Right lobe of liver (tissue), 6 donors: ENCODE measurements at regions of chr3 and their contacts with region 1.

Region 1: DNA sequence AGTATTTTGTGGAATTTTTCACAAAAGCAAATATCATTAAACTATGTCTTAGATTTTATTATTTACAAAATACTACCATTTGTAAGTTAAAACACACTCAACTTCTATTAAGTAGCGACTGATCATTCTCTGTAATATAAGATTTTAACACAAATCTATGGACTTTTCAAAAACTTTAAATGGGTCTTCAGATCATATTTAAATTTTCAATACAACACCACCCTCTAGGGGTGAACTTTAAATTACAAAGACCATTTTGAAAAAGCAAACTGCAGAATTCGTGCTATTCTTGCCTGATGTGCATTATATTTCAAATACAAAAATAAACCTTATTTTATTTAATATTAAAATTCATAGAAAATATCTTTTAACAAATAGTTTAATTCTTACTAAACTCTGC is 8.2 kb upstream of the VGLL4 start:
- DNase-seq: no peak
- ATAC-seq: peak in 3 of 4 donors; percentile 40 to 58 (median 50)
- H3K4me3 ChIP-seq: no peak overlapping the region
- H3K27ac ChIP-seq: no peak overlapping the region
- H3K4me1 ChIP-seq: no peaks in the 10 kb centered on the region
- H3K27me3 ChIP-seq: no peaks in the 10 kb centered on the region
- CTCF ChIP-seq: peak; percentile 44 to 60 (median 53)
- POLR2A ChIP-seq: no peak

Region 2: GRCh38 chr3:11236595-11237461 is 415.1 kb before region 1 on chr3:
- intact Hi-C with region 1: no loop called
- DNase-seq: peak; percentile 69 to 80 (median 75)
- ATAC-seq: peak; percentile 83 to 89 (median 87)
- H3K4me3 ChIP-seq: no peak overlapping the region
- H3K27ac ChIP-seq: no peak overlapping the region
- H3K4me1 ChIP-seq: no peaks in the 10 kb centered on the region
- H3K27me3 ChIP-seq: no peaks in the 10 kb centered on the region
- CTCF ChIP-seq: peak; percentile 40 to 90 (median 88)
- POLR2A ChIP-seq: no peak

Region 3: DNA sequence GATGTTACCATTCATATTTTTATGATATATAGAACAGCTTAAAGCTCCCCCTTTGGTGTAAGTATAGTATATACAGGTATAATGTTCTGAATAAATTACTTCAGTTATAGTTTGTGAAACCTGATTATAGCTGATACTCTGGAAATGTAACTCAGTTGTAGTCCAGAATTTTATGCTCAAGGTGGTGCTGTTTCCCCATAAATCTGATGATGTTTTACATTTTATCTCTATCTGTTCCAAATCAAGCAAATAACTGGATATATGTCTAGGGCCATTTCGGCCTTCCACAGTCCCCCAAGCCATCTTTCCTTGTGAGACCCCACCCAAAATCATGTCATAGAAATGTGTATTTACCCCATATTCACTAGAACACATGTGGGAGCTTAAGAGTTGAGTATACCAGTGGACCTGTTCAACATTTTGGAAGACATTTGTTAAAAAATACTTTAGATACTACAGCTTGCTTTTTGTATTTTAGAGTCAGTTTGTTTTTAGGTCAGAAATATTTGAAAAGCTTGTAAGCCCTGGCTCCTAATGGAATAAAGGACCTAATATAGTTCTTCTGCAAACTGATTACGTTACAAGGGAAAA is 272.6 kb before region 1 on chr3:
- intact Hi-C with region 1: loop called (anchors 5 to 10 kb)
- DNase-seq: no peak
- ATAC-seq: peak; percentile 70 to 87 (median 77)
- H3K4me3 ChIP-seq: no peak overlapping the region
- H3K27ac ChIP-seq: no peak overlapping the region
- H3K4me1 ChIP-seq: no peaks in the 10 kb centered on the region
- H3K27me3 ChIP-seq: no peaks in the 10 kb centered on the region
- CTCF ChIP-seq: peak; percentile 59 to 73 (median 62)
- POLR2A ChIP-seq: no peak